Activated CD8-positive, alpha-beta memory T cell treated with anti-CD3 and anti-CD28 coated beads, Interleukin-2, amount 10 ng/mL, durations not matched to agents 7 days and 5 days (primary cell): ENCODE measurements at regions of chr1 and their contacts with region 1.

Region 1: DNA sequence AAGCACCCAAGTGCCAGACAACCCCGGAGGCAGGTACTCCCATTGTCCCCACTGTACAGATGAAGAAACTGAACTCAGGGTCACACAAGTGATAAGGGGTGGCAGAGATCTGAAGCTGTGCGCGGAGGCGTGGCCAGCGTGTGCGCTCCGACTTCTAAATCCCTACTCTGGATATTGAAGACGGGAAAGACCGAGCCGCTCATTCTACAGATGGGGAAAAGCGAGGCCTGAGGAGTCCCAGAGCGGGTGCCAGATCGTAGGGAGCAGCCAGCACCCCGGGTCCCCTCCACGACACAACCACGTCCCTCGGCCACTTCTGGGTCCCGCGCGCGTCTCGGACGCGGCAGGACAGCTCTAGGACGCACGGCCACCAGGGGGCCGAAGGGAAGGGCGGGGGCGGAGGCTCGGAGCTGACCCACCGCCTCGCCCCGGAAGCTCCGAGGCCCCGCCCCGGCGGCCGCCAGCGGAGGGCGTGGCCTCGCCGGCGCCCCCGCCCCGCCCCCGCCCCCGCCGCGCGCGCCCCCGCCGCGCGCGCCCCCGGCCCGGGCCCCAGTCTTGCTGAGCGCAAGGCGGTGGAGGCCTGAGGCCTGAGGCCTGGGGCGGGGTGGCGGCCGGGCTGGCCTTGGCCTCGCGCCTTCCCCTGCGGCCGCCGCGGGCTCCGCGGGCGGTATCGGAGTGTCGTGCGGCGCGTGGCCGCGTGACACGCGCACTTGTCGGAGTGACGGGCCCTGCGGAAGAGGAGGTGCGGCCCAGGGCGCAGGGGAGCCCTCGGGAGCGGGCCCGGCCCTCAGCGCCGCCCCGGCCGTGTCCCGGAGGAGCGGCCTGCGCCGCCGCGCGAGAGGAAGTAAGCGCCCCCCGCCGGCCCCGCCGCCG is at the start of gene H6PD:
- DNase-seq: peak; percentile 82
- ATAC-seq: peak; percentile 89
- H3K4me3 Mint-ChIP-seq: peak within 1 kb of the TSS; percentile 86
- H3K27ac Mint-ChIP-seq: peak within 1 kb of the TSS; percentile 93
- H3K4me1 Mint-ChIP-seq: peaks cover 39% of the 10 kb centered on the region
- H3K27me3 Mint-ChIP-seq: peaks cover 3% of the 10 kb centered on the region
- total RNA-seq, gene H6PD: 13.2 to 13.5 TPM

Region 2: DNA sequence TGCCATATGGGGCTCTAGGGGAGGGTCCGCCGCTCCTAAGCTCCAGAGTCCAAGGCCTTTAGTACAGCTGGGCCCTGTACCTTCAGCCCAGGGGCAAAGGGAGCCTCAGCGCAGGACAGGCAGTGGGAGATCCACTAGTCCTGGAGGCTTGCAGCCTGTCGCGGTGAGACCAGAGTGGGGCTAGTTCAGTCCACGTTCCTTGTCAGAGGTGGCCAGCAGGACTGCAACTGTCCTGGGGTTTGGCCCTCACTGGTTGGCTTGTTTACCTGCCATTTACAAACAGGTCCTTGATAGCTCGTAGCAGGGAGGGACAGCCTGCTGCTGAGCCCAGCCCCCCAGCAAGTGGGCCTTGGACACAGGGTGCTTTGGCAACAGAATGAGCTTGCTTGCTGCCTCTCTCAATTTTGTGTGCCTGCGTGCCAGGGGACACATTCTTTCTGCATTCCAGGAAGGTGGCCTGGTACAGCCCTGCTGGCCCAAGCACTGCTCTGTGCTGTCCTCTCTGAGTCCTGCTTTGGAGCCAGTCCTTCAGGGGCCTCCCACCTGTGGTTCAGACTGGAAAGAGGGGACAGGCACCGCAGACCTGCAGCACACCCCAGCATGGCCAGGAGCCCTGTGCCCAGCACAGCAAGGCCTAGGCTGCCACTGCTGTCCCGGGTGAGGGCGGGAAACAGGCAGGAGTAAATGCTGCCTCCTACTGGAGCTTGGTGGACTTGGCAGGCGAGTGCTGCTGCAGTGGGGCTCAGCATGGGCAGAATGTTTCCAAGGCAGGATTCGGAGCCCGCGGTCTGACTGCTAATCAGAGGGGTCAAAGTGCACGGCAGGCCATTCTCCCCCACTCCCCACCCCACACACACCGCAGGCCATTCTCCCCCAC is 15.3 kb after region 1 on chr1:
- CTCF ChIA-PET with region 1: interaction called, 25 read pairs
- DNase-seq: peak; percentile 57
- ATAC-seq: peak; percentile 69
- H3K4me3 Mint-ChIP-seq: no peak overlapping the region
- H3K27ac Mint-ChIP-seq: no peak overlapping the region
- H3K4me1 Mint-ChIP-seq: peaks cover 4% of the 10 kb centered on the region
- H3K27me3 Mint-ChIP-seq: no peaks in the 10 kb centered on the region